Activated CD4-positive, alpha-beta T cell treated with anti-CD3 and anti-CD28 coated beads, Interleukin-2, amount 10 ng/mL, durations not matched to agents 7 days and 5 days (primary cell): ENCODE measurements at regions of chr15 and their contacts with region 1.

Region 1: DNA sequence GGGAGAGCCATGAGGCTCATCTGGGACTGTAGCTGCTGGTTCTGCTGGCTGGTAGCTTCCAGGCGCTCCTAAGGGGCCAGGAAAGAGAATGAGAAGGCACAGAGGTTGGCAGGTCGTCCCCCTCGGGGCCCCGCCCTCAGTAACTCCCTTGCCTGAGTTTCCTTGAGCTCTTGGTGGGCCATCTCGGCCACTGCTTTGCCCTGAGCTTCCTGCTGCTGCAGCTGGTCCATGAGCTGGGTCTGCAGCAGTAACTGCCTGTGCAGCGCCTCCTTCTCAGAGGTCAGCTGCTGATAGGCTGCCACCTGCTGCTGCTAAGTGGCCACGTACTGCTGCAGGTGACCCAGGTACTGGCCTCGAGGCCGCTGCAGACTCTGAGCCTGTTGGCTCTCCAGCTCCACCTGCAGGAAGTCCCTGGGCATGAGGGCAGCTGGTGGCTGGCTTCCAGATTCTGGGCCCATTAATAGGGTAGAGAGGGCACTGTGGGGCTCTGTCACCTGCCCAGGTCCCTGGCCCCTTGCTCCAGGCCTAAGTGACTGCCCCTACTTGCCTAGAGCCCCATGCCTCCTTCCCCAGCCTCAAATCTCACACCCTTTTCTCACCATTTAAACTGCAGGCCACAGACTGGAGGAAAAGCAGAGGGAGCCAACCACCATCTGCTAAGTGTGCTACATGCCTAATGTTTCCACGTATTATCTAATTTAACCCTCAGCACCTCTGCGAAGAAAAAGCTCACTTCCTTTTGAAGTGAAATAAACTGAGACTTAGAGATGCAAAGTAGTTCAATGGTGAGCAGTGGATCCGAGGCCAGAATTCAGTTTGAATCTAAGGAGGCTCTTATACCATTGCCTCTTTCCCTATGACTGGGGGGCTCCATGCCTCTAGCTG is 10.8 kb upstream of the VPS33B start:
- DNase-seq: peak; percentile 68
- H3K4me3 Mint-ChIP-seq: no peak overlapping the region
- H3K27ac Mint-ChIP-seq: no peak overlapping the region
- H3K4me1 Mint-ChIP-seq: peaks cover 7% of the 10 kb centered on the region
- H3K27me3 Mint-ChIP-seq: peaks cover 16% of the 10 kb centered on the region

Region 2: GRCh38 chr15:90680371-90680935 is 352.7 kb before region 1 on chr15:
- CTCF ChIA-PET with region 1: no interaction called
- POLR2A ChIA-PET with region 1: no interaction called
- DNase-seq: no peak
- H3K4me3 Mint-ChIP-seq: no peak overlapping the region
- H3K27ac Mint-ChIP-seq: peak overlapping the region; percentile 36
- H3K4me1 Mint-ChIP-seq: peaks cover 61% of the 10 kb centered on the region
- H3K27me3 Mint-ChIP-seq: no peaks in the 10 kb centered on the region

Region 3: DNA sequence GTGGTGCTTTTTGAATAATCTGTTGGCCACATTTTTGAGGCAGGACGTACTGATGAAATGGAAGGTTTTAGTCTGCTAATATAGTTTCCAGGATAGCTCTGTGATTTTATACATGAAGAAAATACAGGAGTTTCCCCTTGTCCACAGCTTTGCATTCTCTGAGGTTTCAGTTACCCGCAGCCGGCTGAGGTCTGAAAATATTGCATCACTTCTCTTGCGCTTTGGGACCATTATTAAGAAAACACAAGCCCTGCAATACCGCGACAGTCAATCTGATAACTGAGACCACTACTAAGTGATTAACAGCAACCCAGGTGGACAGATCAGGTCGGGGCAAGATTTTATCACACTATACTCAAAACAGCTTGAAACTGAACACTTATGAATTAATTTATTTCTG is 283.0 kb before region 1 on chr15:
- CTCF ChIA-PET with region 1: no interaction called
- POLR2A ChIA-PET with region 1: no interaction called
- DNase-seq: peak; percentile 10
- H3K4me3 Mint-ChIP-seq: no peak overlapping the region
- H3K27ac Mint-ChIP-seq: peak overlapping the region; percentile 17
- H3K4me1 Mint-ChIP-seq: peaks cover 30% of the 10 kb centered on the region
- H3K27me3 Mint-ChIP-seq: no peaks in the 10 kb centered on the region

Region 4: DNA sequence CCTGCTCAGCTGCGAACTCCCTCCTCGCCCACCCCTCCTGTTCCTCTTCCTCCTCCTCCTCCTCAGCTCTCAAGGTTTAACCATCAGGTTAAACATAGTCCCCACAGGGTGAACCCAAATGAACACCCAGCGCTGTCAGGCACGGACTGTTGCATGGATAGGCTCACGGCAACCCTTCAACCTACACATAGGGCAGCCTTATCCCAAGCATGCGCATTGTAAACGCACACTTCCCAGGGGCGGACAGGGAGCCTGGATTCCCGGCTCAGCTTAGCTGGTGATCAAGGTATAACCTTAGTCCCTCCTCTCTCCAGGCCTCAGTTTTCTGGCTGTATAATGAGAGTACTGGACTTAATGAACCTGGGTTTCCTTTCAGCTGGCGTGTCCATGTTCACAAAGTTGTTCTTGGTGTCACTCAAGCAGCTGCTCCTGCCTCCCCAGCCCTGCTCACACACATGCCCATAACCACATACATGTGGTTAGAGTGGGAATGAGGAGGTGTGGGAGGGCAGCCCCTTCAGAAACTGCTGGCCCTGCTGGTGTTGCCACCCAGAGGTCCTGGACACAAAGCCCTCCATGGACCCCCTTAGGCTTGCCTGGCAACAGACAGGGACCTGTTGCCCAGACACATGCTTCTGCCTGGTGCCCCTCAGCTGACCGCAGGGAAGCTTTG is 10.2 kb after region 1 on chr15:
- CTCF ChIA-PET with region 1: interaction called, 11 read pairs
- POLR2A ChIA-PET with region 1: interaction called, 3 read pairs
- DNase-seq: no peak
- H3K4me3 Mint-ChIP-seq: no peak overlapping the region
- H3K27ac Mint-ChIP-seq: no peak overlapping the region
- H3K4me1 Mint-ChIP-seq: peaks cover 17% of the 10 kb centered on the region
- H3K27me3 Mint-ChIP-seq: peaks cover 3% of the 10 kb centered on the region

Region 5: GRCh38 chr15:91049378-91050127 is 16.4 kb after region 1 on chr15:
- CTCF ChIA-PET with region 1: interaction called, 11 read pairs
- POLR2A ChIA-PET with region 1: no interaction called
- DNase-seq: peak; percentile 68
- H3K4me3 Mint-ChIP-seq: no peak overlapping the region
- H3K27ac Mint-ChIP-seq: no peak overlapping the region
- H3K4me1 Mint-ChIP-seq: peaks cover 30% of the 10 kb centered on the region
- H3K27me3 Mint-ChIP-seq: peaks cover 29% of the 10 kb centered on the region